T-cell (primary cell): ENCODE measurements at regions of chr2 and their contacts with region 1.

Region 1: DNA sequence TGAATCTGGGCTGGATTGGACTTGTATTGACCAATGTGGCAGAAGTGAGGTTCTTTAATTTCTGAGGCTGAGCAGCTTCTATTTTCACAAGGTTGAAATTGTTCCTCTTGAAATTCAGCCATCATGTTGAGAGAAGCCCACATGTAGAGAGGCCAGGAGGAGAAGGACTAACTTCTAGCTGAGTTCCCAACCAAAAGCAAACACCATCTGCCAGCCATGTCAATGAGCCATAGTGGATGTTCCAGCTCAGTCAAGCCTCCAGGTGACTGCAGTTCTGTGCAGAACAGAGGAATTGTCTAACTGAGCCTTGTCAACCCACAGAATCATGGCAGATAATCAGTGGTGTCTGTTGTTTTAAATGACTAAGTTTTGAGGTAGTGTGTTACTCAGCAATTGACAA is 110.6 kb upstream of the ACVR1 start:
- DNase-seq: no peak
- ATAC-seq: no peak
- H3K4me3 ChIP-seq: no peak overlapping the region
- H3K4me3 Mint-ChIP-seq: no peak overlapping the region
- H3K27ac ChIP-seq: no peak overlapping the region
- H3K27ac Mint-ChIP-seq: no peak overlapping the region
- H3K4me1 ChIP-seq: no peaks in the 10 kb centered on the region
- H3K4me1 Mint-ChIP-seq: no peaks in the 10 kb centered on the region
- H3K27me3 ChIP-seq: no peaks in the 10 kb centered on the region
- H3K27me3 Mint-ChIP-seq: peaks cover 4 to 8% of the 10 kb centered on the region in 2 donors

Region 2: GRCh38 chr2:156918410-156918809 is 1068.4 kb before region 1 on chr2:
- CTCF ChIA-PET with region 1: interaction called in 1 of 2 experiments, 10 read pairs
- POLR2A ChIA-PET with region 1: no interaction called
- DNase-seq: no peak
- ATAC-seq: no peak
- H3K4me3 ChIP-seq: no peak overlapping the region
- H3K4me3 Mint-ChIP-seq: no peak overlapping the region
- H3K27ac ChIP-seq: no peak overlapping the region
- H3K27ac Mint-ChIP-seq: no peak overlapping the region
- H3K4me1 ChIP-seq: no peaks in the 10 kb centered on the region
- H3K4me1 Mint-ChIP-seq: no peaks in the 10 kb centered on the region
- H3K27me3 ChIP-seq: no peaks in the 10 kb centered on the region
- H3K27me3 Mint-ChIP-seq: peaks cover 0 to 3% of the 10 kb centered on the region in 2 donors